Breast epithelium (tissue), 4 donors: ENCODE measurements at regions of chr15 and their contacts with region 1.

Region 1: DNA sequence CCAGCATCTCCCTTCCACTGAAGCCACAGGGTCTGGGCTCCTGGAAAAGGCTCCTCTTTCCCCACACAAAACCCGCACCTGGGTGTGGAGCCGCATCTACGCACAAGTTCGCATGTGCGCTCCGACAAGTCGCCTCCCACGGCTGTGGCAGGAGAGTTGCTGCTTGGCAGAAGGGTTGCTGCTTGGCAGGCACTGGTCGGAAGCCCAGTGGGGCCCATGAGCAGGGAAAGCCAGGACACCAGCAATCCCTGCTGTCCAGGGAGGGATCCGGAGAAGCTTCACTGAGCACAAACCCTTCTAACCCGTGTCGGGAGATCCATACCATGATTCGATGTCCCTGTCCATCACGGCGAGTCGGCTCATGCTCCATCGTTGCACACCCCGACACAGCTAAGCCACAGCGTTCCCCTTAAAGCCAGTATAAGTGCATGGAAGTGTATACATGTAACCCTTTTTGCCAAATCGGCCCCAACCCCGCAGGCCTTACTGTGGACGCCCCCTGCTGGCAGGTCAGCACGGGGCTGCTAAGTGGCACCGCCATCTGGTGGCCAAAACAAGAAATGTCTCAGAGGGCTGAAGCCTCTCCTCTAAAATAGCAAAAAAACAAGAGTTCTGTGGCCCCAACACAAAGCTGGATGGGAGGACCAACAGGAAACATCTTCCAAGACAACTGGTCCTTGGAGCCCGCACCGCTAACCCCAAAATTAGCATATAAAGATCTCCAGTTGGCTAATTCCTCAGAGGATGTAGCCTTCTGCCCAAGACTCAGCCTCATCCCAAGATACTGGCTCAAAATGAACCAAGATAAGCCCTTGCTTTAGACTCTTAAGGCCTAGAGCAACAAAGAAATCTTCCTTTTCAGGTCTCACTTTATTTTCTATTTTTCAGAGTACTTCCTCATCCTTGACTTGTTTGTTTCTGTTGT is 8.3 kb downstream of the ANKRD63 start:
- DNase-seq: peak; percentile 61 to 84
- H3K4me3 ChIP-seq: no peak overlapping the region
- H3K27ac ChIP-seq: no peak overlapping the region
- H3K4me1 ChIP-seq: no peaks in the 10 kb centered on the region
- H3K27me3 ChIP-seq: peaks cover 0 to 1% of the 10 kb centered on the region in 2 donors
- CTCF ChIP-seq: peak; percentile 100
- POLR2A ChIP-seq: no peak

Region 2: DNA sequence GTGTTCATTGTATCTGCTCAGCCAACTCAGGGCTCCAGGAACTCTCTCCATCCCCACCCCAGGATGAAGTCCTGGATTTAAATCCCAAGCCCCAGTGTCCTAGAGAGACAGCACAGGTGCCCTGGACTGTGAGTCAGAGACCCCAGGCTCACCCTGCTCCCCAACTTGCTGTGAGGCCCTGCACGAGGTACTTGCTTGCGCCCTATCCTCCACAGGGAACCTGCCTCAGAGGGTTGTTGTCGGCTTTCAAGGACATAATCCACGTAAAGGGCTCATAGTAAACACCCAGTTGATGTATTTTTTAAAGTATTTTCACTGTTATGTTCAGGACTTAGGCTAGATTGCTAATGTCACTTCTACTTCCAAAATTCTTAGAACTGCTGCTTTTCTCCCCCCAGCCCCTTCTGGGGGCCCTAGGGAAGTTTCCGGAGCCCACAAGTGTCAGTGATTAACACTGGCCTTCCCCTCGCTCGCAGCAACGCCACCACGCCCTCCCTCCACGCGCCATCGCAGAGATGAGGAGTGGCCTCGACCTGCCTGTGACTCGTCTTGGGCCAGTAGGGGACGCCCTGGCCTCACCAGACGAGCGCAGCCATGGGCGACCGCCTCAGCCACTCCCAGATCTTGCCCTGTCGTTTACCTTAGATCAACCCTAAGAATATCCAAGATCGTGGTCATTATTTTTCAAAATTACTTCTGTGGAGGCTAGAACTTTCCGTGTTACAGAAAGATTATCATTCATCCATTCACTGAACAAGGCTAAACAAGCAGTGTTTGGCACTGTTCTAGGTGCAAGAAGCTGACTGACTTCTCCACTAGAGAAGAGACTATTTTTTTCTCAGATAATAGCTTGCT is 229.7 kb before region 1 on chr15:
- intact Hi-C with region 1: loop called (anchors 10 kb)
- DNase-seq: peak; percentile 80 to 85
- H3K4me3 ChIP-seq: peak overlapping the region in 2 of 3 donors; percentile 17 to 50
- H3K27ac ChIP-seq: peak overlapping the region; percentile 62 to 64
- H3K4me1 ChIP-seq: peaks cover 0 to 5% of the 10 kb centered on the region in 2 donors
- H3K27me3 ChIP-seq: no peaks in the 10 kb centered on the region
- CTCF ChIP-seq: peak; percentile 64 to 94 (median 94)
- POLR2A ChIP-seq: no peak

Region 3: DNA sequence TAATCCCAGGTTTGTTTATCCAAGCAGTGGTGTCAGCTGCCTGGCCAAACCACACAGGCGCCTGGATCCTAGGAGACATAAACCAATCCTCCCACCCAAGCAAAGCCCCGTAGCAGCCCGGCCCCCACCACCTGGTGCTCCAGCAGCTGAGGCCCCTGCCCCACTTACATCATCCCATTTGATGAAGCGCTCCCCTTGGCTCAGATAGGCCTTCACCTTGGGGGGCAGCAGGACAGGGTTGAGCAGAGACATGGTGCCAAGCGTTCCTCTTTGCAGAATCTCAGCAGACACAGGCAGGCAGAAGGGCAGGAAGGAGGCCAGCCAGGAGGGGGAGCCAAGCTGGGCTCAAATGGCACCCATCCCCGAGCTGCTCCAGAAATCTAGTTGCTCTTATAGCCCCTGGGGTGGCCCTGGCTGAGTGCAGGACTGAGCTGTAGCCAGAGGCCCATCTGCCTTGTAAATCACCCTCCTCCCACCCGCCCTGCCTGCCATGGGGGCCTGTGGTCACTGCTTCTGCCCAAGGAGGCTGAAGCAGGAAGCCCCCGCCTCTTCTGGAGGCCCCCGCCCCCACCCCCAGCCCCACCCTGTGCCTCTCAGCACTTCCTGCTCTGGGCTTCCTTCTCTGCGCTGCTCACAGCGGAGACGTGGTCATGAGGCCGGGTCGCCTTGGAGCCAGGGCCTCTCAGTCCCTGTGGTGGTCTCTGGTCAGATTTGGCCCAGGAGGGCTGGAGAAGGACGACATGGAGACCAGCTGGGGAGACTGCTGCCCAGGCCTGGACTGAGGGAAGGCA is 33.0 kb after region 1 on chr15 and contains the start of gene PLCB2:
- intact Hi-C with region 1: no loop called
- DNase-seq: no peak
- H3K4me3 ChIP-seq: peak within 1 kb of the TSS; percentile 30 to 45 (median 31)
- H3K27ac ChIP-seq: peak within 1 kb of the TSS in 1 of 2 donors; percentile 61
- H3K4me1 ChIP-seq: no peaks in the 10 kb centered on the region
- H3K27me3 ChIP-seq: no peaks in the 10 kb centered on the region
- CTCF ChIP-seq: no peak
- POLR2A ChIP-seq: no peak
- total RNA-seq, gene PLCB2: 4.3 to 17.9 (median 13.6) TPM